Activated naive CD4-positive, alpha-beta T cell treated with anti-CD3 and anti-CD28 coated beads for 36 hours (primary cell): ENCODE measurements at regions of chrX and their contacts with region 1.

Region 1: GRCh38 chrX:65997978-65998717 is 41.7 kb downstream of the VSIG4 start:
- DNase-seq: no peak
- H3K4me3 Mint-ChIP-seq: no peak overlapping the region
- H3K27ac Mint-ChIP-seq: no peak overlapping the region
- H3K4me1 Mint-ChIP-seq: peaks cover 51% of the 10 kb centered on the region
- H3K27me3 Mint-ChIP-seq: no peaks in the 10 kb centered on the region

Region 2: DNA sequence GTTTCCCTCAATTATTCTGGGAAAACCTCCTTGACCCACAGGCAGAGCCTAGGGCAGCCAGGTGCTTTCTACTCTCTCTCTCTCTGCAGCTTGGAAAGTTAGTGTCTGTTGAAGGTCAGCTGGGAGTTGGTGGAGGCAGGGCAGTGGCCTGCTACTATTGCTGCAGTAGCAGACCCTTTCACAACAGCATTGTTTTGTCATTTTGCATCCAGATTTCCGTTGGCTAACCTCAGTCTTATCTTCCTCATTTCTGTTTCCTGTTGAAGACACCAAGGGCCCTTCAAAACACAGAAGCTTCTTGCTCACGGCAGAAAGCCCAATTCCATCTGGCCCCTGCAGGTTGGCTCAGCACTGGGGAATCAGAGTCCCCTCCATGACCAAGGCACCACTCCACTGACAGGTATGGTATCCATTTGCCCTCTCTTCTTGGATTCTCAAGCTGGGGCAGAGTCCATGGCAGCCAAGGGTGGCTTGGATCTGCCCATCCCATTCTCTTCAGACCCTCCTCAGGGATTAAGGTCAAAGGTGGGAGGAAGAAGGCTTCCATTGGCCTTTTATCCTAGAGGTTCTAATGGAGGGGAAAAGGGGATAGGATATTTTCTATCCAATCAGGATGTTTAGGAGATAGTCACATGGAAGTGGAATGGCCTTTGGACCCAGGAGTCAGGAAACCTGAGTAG is 17.1 kb after region 1 on chrX:
- CTCF ChIA-PET with region 1: interaction called, 4 read pairs
- intact Hi-C with region 1: loop called (anchors 2 kb)
- DNase-seq: no peak
- H3K4me3 Mint-ChIP-seq: no peak overlapping the region
- H3K27ac Mint-ChIP-seq: no peak overlapping the region
- H3K4me1 Mint-ChIP-seq: peaks cover 58% of the 10 kb centered on the region
- H3K27me3 Mint-ChIP-seq: no peaks in the 10 kb centered on the region

Region 3: DNA sequence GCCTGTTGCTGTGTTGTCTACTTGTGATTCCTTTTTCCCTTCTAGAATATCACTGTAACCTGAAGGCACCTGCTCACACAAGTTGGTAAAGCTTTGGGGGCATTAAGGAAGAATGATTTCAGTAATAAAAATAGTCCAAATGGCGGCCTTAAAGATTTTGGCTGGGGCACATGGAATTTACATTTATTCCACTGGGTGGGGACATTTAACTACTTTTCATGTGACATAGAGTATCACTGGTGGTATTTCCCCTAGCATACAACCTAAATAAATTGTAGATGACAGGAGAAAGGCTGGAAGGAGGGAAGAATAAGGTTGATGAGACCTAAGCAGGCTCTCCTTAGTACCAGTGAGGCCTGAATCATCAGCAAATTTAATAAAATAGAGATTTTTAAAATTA is 762.5 kb after region 1 on chrX:
- CTCF ChIA-PET with region 1: no interaction called
- intact Hi-C with region 1: no loop called
- DNase-seq: no peak
- H3K4me3 Mint-ChIP-seq: no peak overlapping the region
- H3K27ac Mint-ChIP-seq: no peak overlapping the region
- H3K4me1 Mint-ChIP-seq: no peaks in the 10 kb centered on the region
- H3K27me3 Mint-ChIP-seq: no peaks in the 10 kb centered on the region